ENCODE measurements at regions of chr1 and their contacts with region 1.

Region 1: DNA sequence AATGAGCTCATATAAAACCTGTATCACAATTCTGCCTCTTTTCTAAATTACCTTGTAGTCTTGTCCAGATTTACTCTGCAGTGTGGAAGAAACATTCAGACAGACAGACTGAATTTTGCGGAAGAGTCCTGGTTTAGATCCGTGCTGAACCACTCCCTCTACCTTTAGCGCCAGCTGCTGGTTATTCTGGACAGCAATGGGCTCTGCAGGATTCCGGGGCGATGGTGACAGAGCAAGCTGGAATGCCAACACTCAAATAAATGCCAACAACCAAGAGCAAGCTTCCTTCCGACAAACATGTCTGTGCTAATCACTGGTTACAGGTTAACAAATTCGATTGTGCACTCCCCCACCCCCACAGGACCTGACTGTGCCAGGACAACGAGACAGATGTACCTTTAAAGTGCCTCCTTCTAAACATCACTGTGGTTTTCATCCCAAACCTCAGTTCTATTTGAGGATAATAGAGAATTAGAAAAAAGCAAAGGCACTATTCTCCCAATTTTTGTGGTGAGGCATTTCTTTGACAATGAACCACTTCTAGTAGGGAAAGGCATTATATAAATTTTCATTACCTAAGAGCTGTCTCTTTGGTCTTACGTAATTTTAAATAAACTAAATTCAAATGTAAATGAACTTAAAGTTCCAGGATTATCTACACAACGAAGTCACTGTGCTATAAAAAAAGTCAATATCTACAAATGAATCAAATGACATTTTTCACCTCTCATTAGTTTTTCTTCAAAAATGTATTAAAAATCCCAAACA is 90.4 kb downstream of the INTS7 start:
- DNase-seq: no peak
- ATAC-seq: peak; percentile 77

Region 2: GRCh38 chr1:211675230-211676105 is 269.4 kb before region 1 on chr1 and contains the start of gene NEK2:
- intact Hi-C with region 1: loop called (anchors 10 kb)
- DNase-seq: peak; percentile 92
- ATAC-seq: peak; percentile 99
- total RNA-seq, gene NEK2: 0.25 TPM

Region 3: DNA sequence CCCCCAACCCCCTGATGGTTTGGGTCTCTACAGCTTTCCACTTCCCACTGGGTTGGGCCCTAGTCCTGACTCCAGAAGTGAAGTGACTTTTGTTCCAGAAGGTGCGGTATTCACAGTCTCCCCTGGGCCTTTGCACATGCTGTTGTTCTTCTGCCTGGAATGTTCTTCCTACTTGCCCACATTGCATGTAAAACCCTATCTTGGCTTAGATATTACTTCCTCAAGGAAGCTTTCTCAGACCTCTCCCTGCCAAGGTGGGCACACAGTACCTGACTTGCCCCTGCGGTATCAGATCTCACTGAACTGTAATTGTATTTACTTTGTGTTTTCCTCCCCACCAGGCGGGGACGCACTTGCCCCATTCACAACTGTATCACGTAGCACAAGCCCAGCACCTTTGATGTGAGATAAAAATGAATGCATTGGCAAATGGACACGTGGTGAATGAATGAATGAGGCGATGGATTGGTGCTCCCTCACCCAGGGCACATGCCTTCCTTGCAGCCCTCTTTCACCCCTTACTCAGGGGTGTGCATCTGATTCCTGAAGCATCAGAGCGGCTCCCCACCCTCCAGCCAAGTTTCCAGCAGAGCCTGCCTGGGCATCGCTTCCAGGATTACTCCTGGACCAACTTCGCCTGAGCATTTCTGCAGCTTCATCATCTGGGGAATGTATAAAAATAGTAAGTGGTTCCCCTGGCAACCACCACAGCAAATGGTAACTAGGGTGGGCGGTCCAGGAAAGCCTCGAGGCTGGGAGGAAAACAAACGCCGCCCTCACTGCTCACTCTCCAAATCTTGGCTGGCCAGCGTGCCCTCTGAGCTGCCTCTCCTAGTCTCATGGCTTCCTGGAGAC is 507.6 kb after region 1 on chr1:
- intact Hi-C with region 1: no loop called
- DNase-seq: peak; percentile 60
- ATAC-seq: peak; percentile 71